ENCODE measurements at regions of chr6 and their contacts with region 1.

Region 1: GRCh38 chr6:41787219-41787917 is at the start of gene TOMM6:
- DNase-seq: peak; percentile 88
- ATAC-seq: peak; percentile 82
- H3K4me3 ChIP-seq: peak within 1 kb of the TSS; percentile 67 to 98
- H3K27ac ChIP-seq: peak within 1 kb of the TSS; percentile 84
- H3K4me1 ChIP-seq: peaks cover 5 to 16% of the 10 kb centered on the region in 2 experiments; a peak in 2 of 4 replicates
- H3K27me3 ChIP-seq: no peaks in the 10 kb centered on the region
- CTCF ChIP-seq: peak in 2 of 3 experiments; percentile 67 to 80; a peak in 4 of 6 replicates
- POLR2A ChIP-seq: peak; percentile 92
- RAD21 ChIP-seq: no peak
- total RNA-seq, gene TOMM6: 292 TPM

Region 2: GRCh38 chr6:41536795-41537758 is 250.3 kb before region 1 on chr6:
- CTCF ChIA-PET with region 1: no interaction called
- POLR2A ChIA-PET with region 1: no interaction called
- RAD21 ChIA-PET with region 1: no interaction called
- intact Hi-C with region 1: no loop called
- DNase-seq: peak; percentile 18
- ATAC-seq: peak; percentile 68
- H3K4me3 ChIP-seq: no peak overlapping the region
- H3K27ac ChIP-seq: peak overlapping the region; percentile 28
- H3K4me1 ChIP-seq: peaks cover 25 to 38% of the 10 kb centered on the region in 2 experiments
- H3K27me3 ChIP-seq: no peaks in the 10 kb centered on the region
- CTCF ChIP-seq: no peak
- POLR2A ChIP-seq: no peak
- RAD21 ChIP-seq: no peak

Region 3: DNA sequence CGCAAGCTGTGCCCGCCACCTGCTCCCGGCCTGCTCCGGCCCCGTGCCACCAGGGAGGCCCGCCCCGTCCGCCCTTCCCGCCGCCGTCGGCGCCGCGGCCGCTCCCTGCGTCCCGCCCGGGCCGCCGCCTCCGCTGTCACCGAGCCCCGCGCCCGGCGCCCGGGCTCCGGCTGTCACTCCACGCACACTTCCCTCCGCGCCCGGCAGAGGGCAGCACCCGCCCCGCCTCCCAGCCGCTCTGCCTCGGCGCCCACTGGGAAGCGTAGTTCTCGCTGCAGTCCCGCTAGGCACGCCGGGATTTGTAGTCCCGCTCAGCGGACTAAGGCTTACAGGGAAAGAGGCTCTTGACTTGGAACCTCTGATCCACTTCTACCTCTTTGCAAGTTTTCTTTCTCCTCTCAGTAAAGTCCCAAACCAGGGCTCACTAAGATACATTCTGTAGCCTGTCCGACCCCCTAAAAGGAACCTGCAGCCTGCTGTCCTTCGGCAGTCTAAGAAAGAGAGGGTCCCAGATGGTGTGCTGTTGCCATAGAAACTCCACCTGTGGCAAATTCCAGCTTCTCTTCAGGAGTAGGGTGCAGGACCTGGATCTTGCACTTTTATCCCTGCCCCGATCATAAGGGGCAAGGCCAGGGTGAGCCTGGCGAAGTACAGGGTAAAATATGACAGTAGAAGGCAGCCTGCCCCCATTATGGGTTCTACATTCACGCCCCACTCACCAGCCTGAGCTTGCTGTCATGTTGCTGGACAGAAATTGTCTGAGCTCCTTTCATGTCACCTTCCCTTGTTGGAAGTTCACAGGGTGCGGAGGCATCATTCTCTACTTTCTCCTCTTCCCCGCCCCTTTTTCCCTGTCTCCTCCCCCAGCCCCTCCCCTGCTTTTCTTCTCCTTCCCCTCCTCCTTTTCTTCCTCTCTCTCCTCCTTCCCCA is 51.7 kb before region 1 on chr6 and contains the start of gene TFEB:
- CTCF ChIA-PET with region 1: interaction called, 19 read pairs
- POLR2A ChIA-PET with region 1: no interaction called
- RAD21 ChIA-PET with region 1: no interaction called
- intact Hi-C with region 1: no loop called
- DNase-seq: peak; percentile 73
- ATAC-seq: peak; percentile 71
- H3K4me3 ChIP-seq: peak within 1 kb of the TSS; percentile 58 to 76
- H3K27ac ChIP-seq: peak within 1 kb of the TSS; percentile 75; the same call in 1 of the 2 replicates
- H3K4me1 ChIP-seq: peaks cover 13 to 26% of the 10 kb centered on the region in 2 experiments
- H3K27me3 ChIP-seq: no peaks in the 10 kb centered on the region
- CTCF ChIP-seq: peak; percentile 68 to 89 (median 77)
- POLR2A ChIP-seq: no peak
- RAD21 ChIP-seq: peak; percentile 63
- total RNA-seq, gene TFEB: 4.8 TPM

Region 4: GRCh38 chr6:41936073-41936837 is 148.9 kb after region 1 on chr6:
- CTCF ChIA-PET with region 1: interaction called, 4 read pairs
- POLR2A ChIA-PET with region 1: no interaction called
- RAD21 ChIA-PET with region 1: no interaction called
- intact Hi-C with region 1: loop called (anchors 5 kb)
- DNase-seq: peak; percentile 53
- ATAC-seq: peak; percentile 74
- H3K4me3 ChIP-seq: no peak overlapping the region
- H3K27ac ChIP-seq: peak overlapping the region; percentile 24; the same call in 1 of the 2 replicates
- H3K4me1 ChIP-seq: peaks cover 6 to 26% of the 10 kb centered on the region in 2 experiments; a peak in 3 of 4 replicates
- H3K27me3 ChIP-seq: no peaks in the 10 kb centered on the region
- CTCF ChIP-seq: peak; percentile 64 to 92 (median 84); a peak in 5 of 6 replicates
- POLR2A ChIP-seq: no peak
- RAD21 ChIP-seq: peak; percentile 72

Region 5: DNA sequence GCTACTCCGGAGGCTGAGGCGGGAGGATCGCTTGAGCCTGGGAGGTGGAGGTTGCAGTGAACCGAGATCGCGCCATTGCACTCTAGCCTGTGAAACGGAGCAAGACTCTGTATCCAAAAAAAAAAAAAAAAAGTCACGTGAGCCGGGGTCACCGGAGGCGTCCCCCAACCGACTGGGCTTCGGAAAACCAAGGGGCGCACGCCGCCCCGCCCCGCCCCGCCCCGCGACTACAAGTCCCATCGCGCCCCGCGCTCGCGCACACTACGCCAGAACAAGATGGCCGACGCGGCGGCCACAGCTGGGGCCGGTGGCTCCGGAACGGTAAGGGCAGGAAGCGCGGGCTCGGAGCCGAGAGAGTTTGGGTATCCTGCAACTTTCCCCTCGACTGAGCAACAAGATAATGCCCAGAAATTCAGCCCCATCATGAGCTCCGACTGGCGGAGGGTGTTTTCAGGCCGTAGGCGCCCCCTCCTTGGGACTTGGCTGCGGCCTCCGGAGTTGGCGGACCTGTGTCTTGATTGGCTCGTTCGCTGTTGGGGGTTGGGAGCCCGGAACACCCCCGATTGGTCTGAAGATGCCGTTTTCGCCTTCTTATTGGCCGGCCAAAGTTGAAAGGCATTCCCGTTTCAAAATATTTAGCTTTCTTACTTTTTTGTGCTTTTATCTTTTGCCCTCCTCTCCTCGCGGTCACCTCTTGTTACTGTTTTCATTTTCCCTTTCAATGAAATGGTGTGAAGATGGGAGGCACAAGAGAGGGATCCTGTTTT is 263.1 kb after region 1 on chr6 and contains the start of gene TAF8:
- CTCF ChIA-PET with region 1: interaction called, 31 read pairs
- POLR2A ChIA-PET with region 1: interaction called, 10 read pairs
- RAD21 ChIA-PET with region 1: no interaction called
- intact Hi-C with region 1: no loop called
- DNase-seq: peak; percentile 82
- ATAC-seq: peak; percentile 90
- H3K4me3 ChIP-seq: peak within 1 kb of the TSS; percentile 69 to 70
- H3K27ac ChIP-seq: peak within 1 kb of the TSS; percentile 78
- H3K4me1 ChIP-seq: peaks cover 32 to 47% of the 10 kb centered on the region in 2 experiments
- H3K27me3 ChIP-seq: no peaks in the 10 kb centered on the region
- CTCF ChIP-seq: no peak
- POLR2A ChIP-seq: peak; percentile 98
- RAD21 ChIP-seq: no peak
- total RNA-seq, gene TAF8: 29.5 TPM

Region 6: DNA sequence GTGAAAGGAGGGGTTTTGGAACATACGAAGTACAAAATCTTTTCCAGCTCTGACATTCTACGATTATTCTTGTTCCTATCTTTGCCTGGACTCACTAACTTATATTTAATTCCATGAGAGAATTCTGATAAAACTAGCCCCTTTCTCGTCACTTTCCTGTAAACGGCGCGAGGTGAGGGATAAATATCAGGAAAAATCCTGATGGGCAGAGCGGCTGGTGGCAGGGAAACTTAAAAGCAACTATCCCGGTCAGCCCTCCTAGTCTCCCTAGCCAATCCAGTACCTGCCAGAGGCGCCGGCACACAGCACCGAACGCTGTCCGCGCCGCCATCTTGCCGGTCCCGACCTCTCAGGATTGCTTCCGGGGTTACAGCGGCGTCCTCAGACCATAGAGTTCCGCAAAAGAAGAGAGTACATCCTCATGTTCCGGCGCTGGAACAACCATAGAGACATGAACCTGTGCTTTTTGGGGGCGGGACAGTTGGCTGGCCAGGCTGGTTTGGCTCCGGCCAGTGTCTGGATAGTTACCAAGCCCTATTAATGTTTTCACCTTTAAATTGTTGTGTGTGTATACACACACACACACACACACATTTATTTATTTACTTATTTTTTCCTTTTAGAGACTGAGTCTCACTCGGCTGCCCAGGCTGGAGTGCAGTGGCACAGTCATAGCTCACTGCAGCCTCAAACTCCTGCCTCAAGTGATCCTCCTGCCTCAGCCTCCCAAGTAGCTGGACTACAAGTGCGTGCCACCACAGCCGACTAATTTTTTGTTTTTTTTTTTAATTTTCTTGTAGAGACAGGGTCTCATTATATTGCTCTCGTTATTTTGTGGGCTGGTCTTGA is 430.4 kb after region 1 on chr6 and contains the start of gene MRPS10:
- CTCF ChIA-PET with region 1: interaction called, 4 read pairs
- POLR2A ChIA-PET with region 1: no interaction called
- RAD21 ChIA-PET with region 1: no interaction called
- intact Hi-C with region 1: loop called (anchors 10 kb)
- DNase-seq: peak; percentile 95
- ATAC-seq: peak; percentile 95
- H3K4me3 ChIP-seq: peak within 1 kb of the TSS; percentile 72 to 97
- H3K27ac ChIP-seq: peak within 1 kb of the TSS; percentile 68
- H3K4me1 ChIP-seq: peaks cover 8 to 59% of the 10 kb centered on the region in 2 experiments; a peak in 3 of 4 replicates
- H3K27me3 ChIP-seq: no peaks in the 10 kb centered on the region
- CTCF ChIP-seq: no peak
- POLR2A ChIP-seq: peak; percentile 71
- RAD21 ChIP-seq: peak; percentile 19; the same call in 1 of the 2 replicates
- total RNA-seq, gene MRPS10: 62.1 TPM